PC-3 (cell line): ENCODE measurements at regions of chr1 and their contacts with region 1.

Region 1: GRCh38 chr1:181142096-181142958 is 53.8 kb downstream of the IER5 start:
- DNase-seq: peak; percentile 88
- ATAC-seq: peak; percentile 65
- H3K4me3 ChIP-seq: peak overlapping the region; percentile 51; the same call in 1 of the 2 replicates
- H3K27ac ChIP-seq: peak overlapping the region; percentile 99
- H3K4me1 ChIP-seq: peaks cover 38% of the 10 kb centered on the region
- H3K27me3 ChIP-seq: no peaks in the 10 kb centered on the region
- CTCF ChIP-seq: peak; percentile 92

Region 2: GRCh38 chr1:181010789-181011188 is 131.5 kb before region 1 on chr1:
- CTCF ChIA-PET with region 1: no interaction called
- POLR2A ChIA-PET with region 1: no interaction called
- intact Hi-C with region 1: no loop called
- DNase-seq: no peak
- ATAC-seq: no peak
- H3K4me3 ChIP-seq: no peak overlapping the region
- H3K27ac ChIP-seq: no peak overlapping the region
- H3K4me1 ChIP-seq: no peaks in the 10 kb centered on the region
- H3K27me3 ChIP-seq: no peaks in the 10 kb centered on the region
- CTCF ChIP-seq: no peak

Region 3: GRCh38 chr1:181021811-181022434 is 120.4 kb before region 1 on chr1:
- CTCF ChIA-PET with region 1: no interaction called
- POLR2A ChIA-PET with region 1: no interaction called
- intact Hi-C with region 1: loop called (anchors 5 kb)
- DNase-seq: peak; percentile 83
- ATAC-seq: peak; percentile 58
- H3K4me3 ChIP-seq: peak overlapping the region; percentile 87
- H3K27ac ChIP-seq: peak overlapping the region; percentile 96
- H3K4me1 ChIP-seq: peaks cover 15% of the 10 kb centered on the region
- H3K27me3 ChIP-seq: no peaks in the 10 kb centered on the region
- CTCF ChIP-seq: no peak

Region 4: GRCh38 chr1:181038399-181038873 is 103.9 kb before region 1 on chr1:
- CTCF ChIA-PET with region 1: interaction called, 3 read pairs
- POLR2A ChIA-PET with region 1: no interaction called
- intact Hi-C with region 1: loop called (anchors 1 kb)
- DNase-seq: peak; percentile 82
- ATAC-seq: peak; percentile 60
- H3K4me3 ChIP-seq: no peak overlapping the region
- H3K27ac ChIP-seq: no peak overlapping the region
- H3K4me1 ChIP-seq: peaks cover 18% of the 10 kb centered on the region; the same call in 1 of the 2 replicates
- H3K27me3 ChIP-seq: no peaks in the 10 kb centered on the region
- CTCF ChIP-seq: peak; percentile 68

Region 5: DNA sequence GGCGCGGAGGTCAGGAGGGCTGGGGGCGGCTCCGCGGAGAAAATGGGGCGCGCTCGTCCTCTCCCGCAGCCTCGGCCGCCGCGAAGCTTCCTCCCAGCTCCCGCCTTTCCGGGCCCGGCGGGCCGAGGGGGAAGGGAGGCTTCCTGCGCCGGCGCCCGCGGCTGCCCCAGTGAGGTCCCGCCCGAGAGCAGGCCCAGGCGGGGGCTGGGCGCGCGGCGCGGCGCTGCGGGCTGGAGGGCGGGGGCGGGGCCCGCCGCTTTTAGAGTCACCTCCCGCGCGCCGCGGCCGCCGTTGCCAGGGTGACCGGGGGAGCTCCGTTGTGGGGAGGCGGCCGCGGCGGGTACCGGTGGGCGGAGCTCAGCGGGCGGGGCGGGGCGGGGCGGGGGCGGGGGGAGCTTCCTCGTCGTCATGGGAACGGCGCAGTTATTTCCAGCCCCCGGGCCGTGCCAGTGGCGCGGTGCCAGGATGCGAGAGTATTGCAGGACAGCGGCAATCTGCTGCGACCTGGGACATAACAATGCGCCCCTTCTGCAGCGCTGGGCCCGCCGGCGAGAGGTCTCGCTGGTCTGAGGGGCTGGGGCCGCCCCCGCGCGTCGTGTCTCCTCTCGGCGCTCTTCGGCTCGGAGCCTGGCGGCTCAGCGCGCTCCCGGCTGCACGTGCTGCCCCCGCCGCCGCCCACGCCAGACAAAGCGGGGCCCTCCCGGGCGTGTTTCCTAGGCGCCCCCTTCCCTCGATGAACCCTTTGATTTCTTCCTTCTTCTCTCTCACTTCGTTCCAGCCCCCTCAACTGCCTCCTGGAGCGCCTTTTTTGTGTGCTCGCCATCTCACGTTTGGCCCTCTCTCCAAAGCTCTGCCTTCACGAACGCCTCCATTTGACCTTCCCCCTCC is 36.9 kb before region 1 on chr1:
- CTCF ChIA-PET with region 1: no interaction called
- POLR2A ChIA-PET with region 1: interaction called, 12 read pairs
- intact Hi-C with region 1: loop called (anchors 1 kb)
- DNase-seq: peak; percentile 85
- ATAC-seq: peak; percentile 72
- H3K4me3 ChIP-seq: peak overlapping the region; percentile 68
- H3K27ac ChIP-seq: peak overlapping the region; percentile 91
- H3K4me1 ChIP-seq: peaks cover 64% of the 10 kb centered on the region
- H3K27me3 ChIP-seq: no peaks in the 10 kb centered on the region
- CTCF ChIP-seq: no peak

Region 6: GRCh38 chr1:181296180-181296579 is 153.9 kb after region 1 on chr1:
- CTCF ChIA-PET with region 1: no interaction called
- POLR2A ChIA-PET with region 1: no interaction called
- intact Hi-C with region 1: no loop called
- DNase-seq: no peak
- ATAC-seq: no peak
- H3K4me3 ChIP-seq: no peak overlapping the region
- H3K27ac ChIP-seq: no peak overlapping the region
- H3K4me1 ChIP-seq: no peaks in the 10 kb centered on the region
- H3K27me3 ChIP-seq: peaks cover 5% of the 10 kb centered on the region; the same call in 1 of the 2 replicates
- CTCF ChIP-seq: no peak

Region 7: GRCh38 chr1:181335629-181336028 is 193.3 kb after region 1 on chr1:
- CTCF ChIA-PET with region 1: no interaction called
- POLR2A ChIA-PET with region 1: no interaction called
- intact Hi-C with region 1: no loop called
- DNase-seq: no peak
- ATAC-seq: no peak
- H3K4me3 ChIP-seq: no peak overlapping the region
- H3K27ac ChIP-seq: no peak overlapping the region
- H3K4me1 ChIP-seq: no peaks in the 10 kb centered on the region
- H3K27me3 ChIP-seq: no peaks in the 10 kb centered on the region
- CTCF ChIP-seq: no peak